Heart right ventricle (tissue), 16 donors: ENCODE measurements at regions of chr12 and their contacts with region 1.

Region 1: GRCh38 chr12:6825398-6826124 is 2.6 kb upstream of the P3H3 start:
- DNase-seq: peak; percentile 87 to 89
- ATAC-seq: peak; percentile 54 to 73 (median 62)
- H3K4me3 ChIP-seq: peak overlapping the region in 5 of 10 donors; percentile 17 to 39 (median 25)
- H3K27ac ChIP-seq: peak overlapping the region in 1 of 10 donors; percentile 18
- H3K4me1 ChIP-seq: peaks cover 15 to 65% (median 45%) of the 10 kb centered on the region in 9 donors
- H3K27me3 ChIP-seq: peaks cover 0 to 59% (median 0%) of the 10 kb centered on the region in 7 donors
- CTCF ChIP-seq: peak; percentile 80 to 97 (median 95)

Region 2: DNA sequence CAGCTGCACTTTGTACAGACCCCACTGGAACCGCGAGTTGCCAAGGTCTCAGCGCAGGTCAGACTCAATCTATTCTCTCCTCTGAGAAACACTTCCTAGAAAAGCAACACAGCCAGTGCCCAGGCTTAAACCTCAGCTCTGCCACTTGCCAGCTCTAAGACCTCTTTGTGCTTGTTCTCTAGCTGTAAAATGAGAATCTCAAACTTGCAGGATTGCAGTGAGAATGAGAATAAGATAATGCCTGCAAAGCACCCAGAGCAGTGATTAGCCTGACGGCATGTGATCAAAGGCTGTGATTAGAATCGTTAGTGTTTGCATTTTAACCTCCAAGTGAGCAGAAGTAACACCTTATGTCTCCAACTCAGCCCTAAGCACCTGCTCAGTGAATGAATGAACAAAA is 901.8 kb before region 1 on chr12:
- intact Hi-C with region 1: no loop called
- DNase-seq: no peak
- ATAC-seq: no peak
- H3K4me3 ChIP-seq: no peak overlapping the region
- H3K27ac ChIP-seq: no peak overlapping the region
- H3K4me1 ChIP-seq: no peaks in the 10 kb centered on the region
- H3K27me3 ChIP-seq: peaks cover 0 to 11% (median 0%) of the 10 kb centered on the region in 7 donors
- CTCF ChIP-seq: no peak

Region 3: GRCh38 chr12:6394398-6394797 is 431.2 kb before region 1 on chr12:
- intact Hi-C with region 1: no loop called
- DNase-seq: no peak
- ATAC-seq: peak in 5 of 8 donors; percentile 8 to 33 (median 17)
- H3K4me3 ChIP-seq: no peak overlapping the region
- H3K27ac ChIP-seq: peak overlapping the region in 1 of 10 donors; percentile 51
- H3K4me1 ChIP-seq: peaks cover 4 to 37% (median 16%) of the 10 kb centered on the region in 9 donors
- H3K27me3 ChIP-seq: no peaks in the 10 kb centered on the region
- CTCF ChIP-seq: no peak

Region 4: DNA sequence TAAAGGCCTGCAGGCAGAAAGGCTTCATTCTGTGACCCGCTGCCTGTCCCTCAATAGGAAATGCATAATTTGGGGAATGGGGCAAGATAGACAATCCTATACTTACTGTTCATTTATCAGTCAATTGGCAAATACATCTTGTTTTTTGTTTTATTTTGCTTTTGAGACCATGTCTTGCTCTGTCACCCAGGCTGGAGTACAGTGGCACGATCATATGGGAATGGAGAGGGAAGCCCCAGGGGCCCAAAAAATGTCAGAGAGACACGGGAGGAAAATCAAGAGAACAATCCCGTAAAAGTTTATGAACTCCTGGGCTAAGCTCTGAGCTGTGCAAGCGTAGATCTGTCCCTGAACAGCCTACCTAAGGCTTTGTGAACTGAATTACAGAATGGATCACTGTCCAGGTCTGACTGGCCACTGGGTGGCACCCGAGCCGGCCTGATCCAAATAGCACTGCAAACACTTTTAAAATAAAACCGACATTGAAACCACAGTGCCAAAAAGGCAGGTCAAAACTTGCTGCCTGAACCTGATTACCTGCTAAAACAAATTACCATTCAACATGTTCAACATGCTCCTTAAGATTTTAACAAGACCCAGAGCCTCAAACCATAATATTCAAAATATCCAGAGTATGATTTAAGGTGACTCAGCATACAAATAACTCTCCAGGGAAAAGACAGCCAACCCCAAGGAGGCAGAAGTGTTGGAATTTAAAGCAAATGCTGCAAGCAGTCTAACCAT is 89.9 kb before region 1 on chr12:
- intact Hi-C with region 1: loop called in 6 of 10 experiments (anchors 2 to 5 kb)
- DNase-seq: peak; percentile 52 to 68
- ATAC-seq: peak; percentile 86 to 92 (median 90)
- H3K4me3 ChIP-seq: no peak overlapping the region
- H3K27ac ChIP-seq: peak overlapping the region in 7 of 10 donors; percentile 10 to 56 (median 49)
- H3K4me1 ChIP-seq: peaks cover 0 to 12% (median 7%) of the 10 kb centered on the region in 9 donors
- H3K27me3 ChIP-seq: no peaks in the 10 kb centered on the region
- CTCF ChIP-seq: peak; percentile 44 to 82 (median 73)

Region 5: DNA sequence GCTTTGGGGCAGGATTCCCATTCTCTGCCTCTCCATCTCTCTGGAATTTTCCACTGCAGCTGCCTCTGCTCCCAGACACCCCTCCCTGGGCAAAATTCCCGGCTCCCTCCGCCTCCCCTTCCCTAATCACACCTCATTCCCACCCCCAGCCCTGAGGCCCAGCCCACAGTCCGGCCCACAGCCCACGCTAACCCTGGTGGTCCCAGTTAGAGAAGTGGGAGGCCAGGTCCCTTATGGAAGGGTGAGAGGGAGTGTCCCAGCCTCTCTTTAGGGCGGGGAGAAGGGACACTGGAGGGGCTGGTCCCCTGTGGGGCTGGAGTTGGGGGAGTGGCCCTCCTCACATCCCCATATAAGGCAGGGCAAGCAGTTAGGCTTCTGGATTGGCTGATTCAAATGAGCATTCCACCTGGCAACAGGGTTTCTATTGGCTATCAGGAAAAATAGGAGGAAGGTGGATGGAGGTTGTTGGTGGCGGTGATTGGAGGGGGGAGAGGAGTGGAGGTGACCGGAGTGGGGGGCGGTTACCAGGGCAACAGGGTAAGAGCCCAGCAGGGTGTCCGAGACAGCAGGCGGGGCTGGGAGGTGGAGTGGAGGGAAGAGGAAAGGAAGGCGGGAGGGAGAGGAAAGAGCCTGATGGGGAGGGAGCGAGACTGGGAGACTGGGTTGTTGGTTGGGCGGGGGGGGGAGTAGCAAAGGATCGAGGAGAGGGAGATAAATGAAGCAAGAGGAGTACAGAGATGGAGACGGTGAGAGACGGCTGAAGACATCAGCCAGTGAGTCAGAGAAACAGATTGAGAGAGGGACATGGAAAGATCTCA is 61.3 kb before region 1 on chr12:
- intact Hi-C with region 1: loop called in 2 of 10 experiments (anchors 5 to 10 kb)
- DNase-seq: peak; percentile 93 to 96
- ATAC-seq: peak; percentile 80 to 92 (median 88)
- H3K4me3 ChIP-seq: peak overlapping the region in 9 of 10 donors; percentile 13 to 81 (median 31)
- H3K27ac ChIP-seq: peak overlapping the region; percentile 87 to 99 (median 94)
- H3K4me1 ChIP-seq: peaks cover 7 to 52% (median 42%) of the 10 kb centered on the region in 9 donors
- H3K27me3 ChIP-seq: peaks cover 0 to 27% (median 0%) of the 10 kb centered on the region in 7 donors
- CTCF ChIP-seq: no peak

Region 6: GRCh38 chr12:6778574-6779550 is 46.7 kb before region 1 on chr12:
- intact Hi-C with region 1: loop called in 3 of 10 experiments (anchors 5 kb)
- DNase-seq: peak; percentile 92 to 97
- ATAC-seq: peak; percentile 94 to 97 (median 96)
- H3K4me3 ChIP-seq: peak overlapping the region in 9 of 10 donors; percentile 35 to 60 (median 43)
- H3K27ac ChIP-seq: peak overlapping the region in 9 of 10 donors; percentile 49 to 73 (median 62)
- H3K4me1 ChIP-seq: peaks cover 0 to 30% (median 15%) of the 10 kb centered on the region in 9 donors
- H3K27me3 ChIP-seq: peaks cover 0 to 40% (median 4%) of the 10 kb centered on the region in 7 donors
- CTCF ChIP-seq: peak in 8 of 9 donors; percentile 92 to 97 (median 96)

Region 7: DNA sequence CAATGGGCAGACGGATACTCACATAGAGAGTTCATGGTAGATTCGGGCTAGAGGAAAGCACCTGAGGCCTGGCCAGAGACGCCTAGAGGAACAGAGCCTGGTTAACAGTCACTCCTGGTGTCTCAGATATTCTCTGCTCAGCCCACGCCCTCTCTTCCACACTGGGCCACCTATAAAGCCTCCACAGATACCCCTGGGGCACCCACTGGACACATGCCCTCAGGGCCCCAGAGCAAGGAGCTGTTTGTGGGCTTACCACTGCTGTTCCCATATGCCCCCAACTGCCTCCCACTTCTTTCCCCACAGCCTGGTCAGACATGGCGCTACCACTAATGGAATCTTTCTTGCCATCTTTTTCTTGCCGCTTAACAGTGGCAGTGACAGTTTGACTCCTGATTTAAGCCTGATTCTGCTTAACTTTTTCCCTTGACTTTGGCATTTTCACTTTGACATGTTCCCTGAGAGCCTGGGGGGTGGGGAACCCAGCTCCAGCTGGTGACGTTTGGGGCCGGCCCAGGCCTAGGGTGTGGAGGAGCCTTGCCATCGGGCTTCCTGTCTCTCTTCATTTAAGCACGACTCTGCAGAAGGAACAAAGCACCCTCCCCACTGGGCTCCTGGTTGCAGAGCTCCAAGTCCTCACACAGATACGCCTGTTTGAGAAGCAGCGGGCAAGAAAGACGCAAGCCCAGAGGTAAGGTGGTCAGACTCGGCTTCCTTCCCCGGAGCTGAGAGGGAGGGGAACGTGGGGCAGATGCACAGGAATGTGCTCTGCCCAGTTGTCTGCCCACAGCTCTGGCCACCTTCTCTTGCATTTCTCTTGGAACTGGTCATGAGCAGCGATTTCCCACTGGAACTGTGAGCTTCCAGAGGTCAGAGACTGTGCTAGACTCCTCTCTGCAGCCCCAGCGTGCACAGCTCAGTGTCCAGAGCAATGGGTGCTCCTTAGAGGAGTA is 36.3 kb before region 1 on chr12 and contains the start of gene CD4:
- intact Hi-C with region 1: loop called in 3 of 10 experiments (anchors 5 kb)
- DNase-seq: peak; percentile 59 to 70
- ATAC-seq: peak; percentile 50 to 82 (median 72)
- H3K4me3 ChIP-seq: peak within 1 kb of the TSS in 7 of 10 donors; percentile 7 to 56 (median 41)
- H3K27ac ChIP-seq: peak within 1 kb of the TSS in 5 of 10 donors; percentile 14 to 86 (median 28)
- H3K4me1 ChIP-seq: peaks cover 0 to 51% (median 15%) of the 10 kb centered on the region in 9 donors
- H3K27me3 ChIP-seq: peaks cover 0 to 1% (median 0%) of the 10 kb centered on the region in 7 donors
- CTCF ChIP-seq: no peak
- total RNA-seq, gene CD4: 2.8 to 44.3 (median 5.0) TPM

Region 8: GRCh38 chr12:7175493-7175892 is 349.9 kb after region 1 on chr12:
- intact Hi-C with region 1: no loop called
- DNase-seq: no peak
- ATAC-seq: no peak
- H3K4me3 ChIP-seq: no peak overlapping the region
- H3K27ac ChIP-seq: no peak overlapping the region
- H3K4me1 ChIP-seq: no peaks in the 10 kb centered on the region
- H3K27me3 ChIP-seq: peaks cover 0 to 28% (median 10%) of the 10 kb centered on the region in 7 donors
- CTCF ChIP-seq: no peak